ENCODE measurements at regions of chr14 and their contacts with region 1.

Region 1: GRCh38 chr14:71403656-71404055 is 496.4 kb downstream of the PCNX1 start:
- DNase-seq: peak; percentile 28 to 51 (median 45)
- H3K4me3 ChIP-seq: no peak overlapping the region
- H3K4me3 Mint-ChIP-seq: no peak overlapping the region
- H3K27ac ChIP-seq: no peak overlapping the region
- H3K27ac Mint-ChIP-seq: peak overlapping the region in 6 of 7 donors; percentile 21 to 74 (median 46)
- H3K4me1 ChIP-seq: peaks cover 24 to 34% of the 10 kb centered on the region in 2 donors
- H3K4me1 Mint-ChIP-seq: peaks cover 31% of the 10 kb centered on the region
- H3K27me3 ChIP-seq: no peaks in the 10 kb centered on the region
- H3K27me3 Mint-ChIP-seq: no peaks in the 10 kb centered on the region
- CTCF ChIP-seq: peak; percentile 35

Region 2: GRCh38 chr14:71362920-71363584 is 40.6 kb before region 1 on chr14:
- intact Hi-C with region 1: loop called in 1 of 2 experiments (anchors 5 kb)
- DNase-seq: peak; percentile 76 to 86 (median 77)
- H3K4me3 ChIP-seq: peak overlapping the region in 1 of 3 experiments; percentile 31
- H3K4me3 Mint-ChIP-seq: peak overlapping the region in 1 of 2 donors; percentile 55
- H3K27ac ChIP-seq: peak overlapping the region; percentile 65 to 90
- H3K27ac Mint-ChIP-seq: peak overlapping the region; percentile 90 to 95 (median 92)
- H3K4me1 ChIP-seq: peaks cover 45 to 60% of the 10 kb centered on the region in 2 donors
- H3K4me1 Mint-ChIP-seq: peaks cover 64% of the 10 kb centered on the region
- H3K27me3 ChIP-seq: no peaks in the 10 kb centered on the region
- H3K27me3 Mint-ChIP-seq: peaks cover 0 to 2% (median 0%) of the 10 kb centered on the region in 3 donors
- CTCF ChIP-seq: no peak